IMR-90 (cell line): ENCODE measurements at regions of chr15 and their contacts with region 1.

Region 1: GRCh38 chr15:39770748-39771689 is 11.6 kb downstream of the FSIP1 start:
- DNase-seq: peak; percentile 92
- ATAC-seq: peak; percentile 98
- H3K4me3 ChIP-seq: peak overlapping the region; percentile 21; the same call in 1 of the 2 replicates
- H3K27ac ChIP-seq: peak overlapping the region; percentile 80
- H3K4me1 ChIP-seq: peaks cover 10% of the 10 kb centered on the region
- H3K27me3 ChIP-seq: no peaks in the 10 kb centered on the region
- CTCF ChIP-seq: no peak
- POLR2A ChIP-seq: no peak
- RAD21 ChIP-seq: no peak

Region 2: DNA sequence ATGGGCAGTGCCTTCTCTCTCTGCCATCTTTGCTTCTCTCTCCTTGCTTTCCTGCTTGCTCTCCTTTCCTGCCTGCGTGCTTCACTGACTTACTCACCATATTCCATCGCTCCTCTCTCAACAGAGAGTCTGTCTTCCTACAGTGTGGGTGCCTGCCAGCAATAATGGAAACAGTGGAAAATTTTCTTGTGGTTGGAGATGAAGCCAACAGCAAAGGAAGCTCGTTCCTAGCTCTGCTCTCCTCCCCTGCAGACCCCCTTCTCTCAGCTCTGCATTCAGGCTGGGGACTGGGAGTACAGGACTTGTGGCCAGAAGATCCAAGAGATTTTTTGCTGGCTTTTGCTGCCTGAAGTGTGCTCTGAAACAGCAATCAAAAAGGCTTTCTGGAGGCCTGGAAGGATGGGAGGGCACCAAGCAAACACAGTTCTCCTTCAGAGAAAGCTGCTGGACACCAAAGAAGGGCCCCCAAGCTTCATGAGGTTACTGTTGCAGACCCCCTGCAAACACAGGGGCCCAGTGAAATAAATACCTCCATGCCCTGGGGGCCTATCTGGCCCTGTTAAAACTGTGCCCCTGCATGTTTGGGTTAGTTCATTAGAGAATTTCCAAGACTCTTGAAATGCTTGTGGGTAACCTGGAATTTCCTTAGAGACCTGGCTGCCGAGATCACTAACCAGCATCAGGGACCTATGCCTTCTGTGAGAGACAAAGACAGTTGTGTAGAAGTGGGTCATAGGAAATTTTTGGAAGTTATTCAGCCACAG is 1056.5 kb before region 1 on chr15:
- CTCF ChIA-PET with region 1: no interaction called
- POLR2A ChIA-PET with region 1: no interaction called
- dilution Hi-C with region 1: no loop called
- in situ Hi-C with region 1: loop called (anchors 10 kb)
- intact Hi-C with region 1: no loop called
- DNase-seq: peak; percentile 96
- ATAC-seq: peak; percentile 92
- H3K4me3 ChIP-seq: no peak overlapping the region
- H3K27ac ChIP-seq: peak overlapping the region; percentile 88
- H3K4me1 ChIP-seq: peaks cover 12% of the 10 kb centered on the region
- H3K27me3 ChIP-seq: no peaks in the 10 kb centered on the region
- CTCF ChIP-seq: no peak
- POLR2A ChIP-seq: no peak
- RAD21 ChIP-seq: peak; percentile 28; the same call in 1 of the 2 replicates

Region 3: DNA sequence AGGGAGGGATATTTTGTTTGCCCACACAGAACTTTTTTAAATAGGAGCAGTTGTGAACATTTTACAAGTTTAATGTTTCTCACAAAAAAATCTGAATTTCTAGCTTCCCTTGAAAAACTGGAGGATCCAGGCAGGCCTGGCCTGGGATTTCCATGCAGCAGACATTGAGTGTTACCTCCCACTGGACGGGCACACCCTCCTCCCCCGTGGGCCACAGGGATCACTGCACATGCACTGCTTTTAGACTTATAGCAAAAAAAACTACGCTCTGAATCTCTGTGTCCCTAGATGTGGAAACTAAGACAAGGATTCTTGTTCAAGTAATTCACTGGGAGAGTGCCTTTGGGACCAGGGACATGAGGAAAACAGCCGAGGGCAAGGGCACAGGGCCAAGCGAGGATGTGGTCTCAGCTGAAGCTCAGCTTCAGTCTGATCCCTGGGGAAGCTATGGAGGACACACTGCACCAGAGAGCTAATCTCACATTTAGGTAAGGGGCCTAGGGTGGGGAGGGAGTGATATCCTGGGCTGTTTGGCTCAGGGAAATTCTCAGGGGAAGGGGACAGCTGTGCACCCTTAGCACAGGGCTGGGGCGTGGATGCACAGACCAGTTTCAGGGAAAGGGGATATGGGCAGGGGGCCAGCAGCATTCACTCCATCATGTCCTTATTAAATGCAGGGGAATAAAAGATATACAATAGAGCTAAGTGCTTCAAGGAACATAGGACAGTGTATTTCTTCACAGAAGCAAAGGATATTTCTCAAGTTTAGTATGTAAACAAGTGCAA is 34.4 kb before region 1 on chr15:
- CTCF ChIA-PET with region 1: no interaction called
- POLR2A ChIA-PET with region 1: no interaction called
- dilution Hi-C with region 1: no loop called
- in situ Hi-C with region 1: no loop called
- intact Hi-C with region 1: no loop called
- DNase-seq: no peak
- ATAC-seq: no peak
- H3K4me3 ChIP-seq: no peak overlapping the region
- H3K27ac ChIP-seq: no peak overlapping the region
- H3K4me1 ChIP-seq: peaks cover 5% of the 10 kb centered on the region
- H3K27me3 ChIP-seq: no peaks in the 10 kb centered on the region
- CTCF ChIP-seq: no peak
- POLR2A ChIP-seq: no peak
- RAD21 ChIP-seq: no peak

Region 4: GRCh38 chr15:39788108-39788507 is 17.1 kb after region 1 on chr15:
- CTCF ChIA-PET with region 1: no interaction called
- POLR2A ChIA-PET with region 1: no interaction called
- dilution Hi-C with region 1: no loop called
- in situ Hi-C with region 1: no loop called
- intact Hi-C with region 1: no loop called
- DNase-seq: peak; percentile 52
- ATAC-seq: no peak
- H3K4me3 ChIP-seq: no peak overlapping the region
- H3K27ac ChIP-seq: peak overlapping the region; percentile 85
- H3K4me1 ChIP-seq: peaks cover 27% of the 10 kb centered on the region
- H3K27me3 ChIP-seq: no peaks in the 10 kb centered on the region
- CTCF ChIP-seq: no peak
- POLR2A ChIP-seq: no peak
- RAD21 ChIP-seq: no peak